K562 (cell line): ENCODE measurements at regions of chr11 and their contacts with region 1.

Region 1: GRCh38 chr11:112280268-112281126 is 19.8 kb upstream of the PLET1 start:
- DNase-seq: peak; percentile 76 to 87 (median 78)
- ATAC-seq: peak; percentile 94
- H3K4me3 ChIP-seq: peak overlapping the region; percentile 23; the same call in 1 of the 2 replicates
- H3K27ac ChIP-seq: no peak overlapping the region
- H3K4me1 ChIP-seq: peaks cover 18 to 19% of the 10 kb centered on the region in 2 experiments
- H3K27me3 ChIP-seq: peaks cover 0 to 7% of the 10 kb centered on the region in 2 experiments; a peak in 1 of 5 replicates
- CTCF ChIP-seq: peak; percentile 78 to 89 (median 84)
- EP300 ChIP-seq: no peak
- POLR2A ChIP-seq: no peak
- RAD21 ChIP-seq: peak; percentile 72 to 81

Region 2: DNA sequence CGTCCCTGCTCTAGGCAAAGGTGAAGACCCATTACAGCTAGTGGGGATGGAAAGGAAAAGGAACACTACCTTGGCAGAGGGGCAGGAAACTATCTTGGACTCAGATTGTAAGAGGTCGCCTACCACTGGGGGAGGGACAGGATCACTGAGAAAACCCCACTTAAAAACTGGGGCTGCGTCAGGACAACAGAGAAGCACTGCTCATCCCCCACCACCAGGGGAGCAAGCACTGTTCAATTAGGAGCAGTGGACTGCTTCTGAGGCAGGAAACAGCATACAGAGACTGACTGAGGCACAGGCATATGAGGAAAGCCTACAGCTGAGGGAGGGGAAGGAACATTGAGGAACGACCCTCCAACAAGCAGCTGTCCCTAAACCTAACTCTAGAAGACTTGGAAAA is 276.1 kb before region 1 on chr11:
- CTCF ChIA-PET with region 1: no interaction called
- POLR2A ChIA-PET with region 1: no interaction called
- in situ Hi-C with region 1: no loop called
- intact Hi-C with region 1: no loop called
- DNase-seq: peak; percentile 34 to 53 (median 44)
- ATAC-seq: peak; percentile 94
- H3K4me3 ChIP-seq: no peak overlapping the region
- H3K27ac ChIP-seq: no peak overlapping the region
- H3K4me1 ChIP-seq: no peaks in the 10 kb centered on the region; a peak in 1 of 5 replicates
- H3K27me3 ChIP-seq: no peaks in the 10 kb centered on the region
- CTCF ChIP-seq: peak; percentile 44 to 58 (median 49)
- EP300 ChIP-seq: no peak
- POLR2A ChIP-seq: no peak
- RAD21 ChIP-seq: no peak

Region 3: DNA sequence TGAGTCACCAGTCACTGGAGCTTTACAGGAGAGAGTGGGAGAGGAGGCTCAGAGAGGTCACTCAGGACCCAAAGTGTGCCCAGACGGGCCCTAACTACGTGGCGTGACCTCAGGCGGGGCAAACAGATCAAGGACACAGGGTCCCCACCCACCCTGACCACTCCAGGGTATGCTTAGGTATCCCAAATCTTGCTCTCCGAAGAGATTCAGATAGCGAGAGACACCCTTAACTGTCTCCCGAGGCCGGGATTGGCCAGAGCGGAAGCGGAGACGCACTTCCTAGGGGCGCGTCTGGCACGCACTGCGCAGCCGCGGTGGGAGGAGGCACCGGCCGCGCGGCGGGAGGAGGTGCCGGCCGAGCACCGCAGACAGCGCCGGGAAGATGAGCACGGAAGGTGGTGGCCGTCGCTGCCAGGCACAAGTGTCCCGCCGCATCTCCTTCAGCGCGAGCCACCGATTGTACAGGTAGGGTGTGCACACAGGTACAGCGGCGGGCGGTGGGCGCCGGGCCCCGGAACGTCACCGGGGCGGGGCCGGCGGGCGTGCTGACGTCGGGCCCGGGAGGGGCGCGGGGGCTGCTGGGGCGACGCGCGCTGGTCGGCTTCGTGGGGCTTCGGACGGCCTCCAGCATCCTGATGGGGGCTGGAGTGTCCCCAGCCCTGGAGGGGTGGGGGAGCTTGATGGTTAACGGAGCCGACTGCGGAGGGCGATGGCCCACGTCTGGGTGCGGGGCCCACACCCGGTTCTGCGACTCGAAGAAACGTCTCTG is 54.3 kb before region 1 on chr11 and contains the start of gene PTS:
- CTCF ChIA-PET with region 1: interaction called, 95 read pairs
- POLR2A ChIA-PET with region 1: no interaction called
- in situ Hi-C with region 1: loop called (anchors 5 kb)
- intact Hi-C with region 1: loop called (anchors 1 kb)
- DNase-seq: peak; percentile 94 to 96 (median 96)
- ATAC-seq: peak; percentile 98
- H3K4me3 ChIP-seq: peak within 1 kb of the TSS; percentile 85
- H3K27ac ChIP-seq: peak within 1 kb of the TSS; percentile 87
- H3K4me1 ChIP-seq: peaks cover 5 to 8% of the 10 kb centered on the region in 2 experiments; a peak in 3 of 5 replicates
- H3K27me3 ChIP-seq: no peaks in the 10 kb centered on the region
- CTCF ChIP-seq: no peak
- EP300 ChIP-seq: no peak
- POLR2A ChIP-seq: peak; percentile 94
- RAD21 ChIP-seq: no peak
- polyA plus RNA-seq, gene PTS: 70.4 to 72.7 TPM

Region 4: GRCh38 chr11:112541140-112541901 is 260.8 kb after region 1 on chr11:
- CTCF ChIA-PET with region 1: no interaction called
- POLR2A ChIA-PET with region 1: no interaction called
- in situ Hi-C with region 1: no loop called
- intact Hi-C with region 1: no loop called
- DNase-seq: no peak
- ATAC-seq: no peak
- H3K4me3 ChIP-seq: no peak overlapping the region
- H3K27ac ChIP-seq: no peak overlapping the region
- H3K4me1 ChIP-seq: no peaks in the 10 kb centered on the region
- H3K27me3 ChIP-seq: peaks cover 0 to 1% of the 10 kb centered on the region in 2 experiments; a peak in 2 of 5 replicates
- CTCF ChIP-seq: no peak
- EP300 ChIP-seq: no peak
- POLR2A ChIP-seq: no peak
- RAD21 ChIP-seq: no peak